CD14-positive monocyte (primary cell): ENCODE measurements at regions of chr11 and their contacts with region 1.

Region 1: DNA sequence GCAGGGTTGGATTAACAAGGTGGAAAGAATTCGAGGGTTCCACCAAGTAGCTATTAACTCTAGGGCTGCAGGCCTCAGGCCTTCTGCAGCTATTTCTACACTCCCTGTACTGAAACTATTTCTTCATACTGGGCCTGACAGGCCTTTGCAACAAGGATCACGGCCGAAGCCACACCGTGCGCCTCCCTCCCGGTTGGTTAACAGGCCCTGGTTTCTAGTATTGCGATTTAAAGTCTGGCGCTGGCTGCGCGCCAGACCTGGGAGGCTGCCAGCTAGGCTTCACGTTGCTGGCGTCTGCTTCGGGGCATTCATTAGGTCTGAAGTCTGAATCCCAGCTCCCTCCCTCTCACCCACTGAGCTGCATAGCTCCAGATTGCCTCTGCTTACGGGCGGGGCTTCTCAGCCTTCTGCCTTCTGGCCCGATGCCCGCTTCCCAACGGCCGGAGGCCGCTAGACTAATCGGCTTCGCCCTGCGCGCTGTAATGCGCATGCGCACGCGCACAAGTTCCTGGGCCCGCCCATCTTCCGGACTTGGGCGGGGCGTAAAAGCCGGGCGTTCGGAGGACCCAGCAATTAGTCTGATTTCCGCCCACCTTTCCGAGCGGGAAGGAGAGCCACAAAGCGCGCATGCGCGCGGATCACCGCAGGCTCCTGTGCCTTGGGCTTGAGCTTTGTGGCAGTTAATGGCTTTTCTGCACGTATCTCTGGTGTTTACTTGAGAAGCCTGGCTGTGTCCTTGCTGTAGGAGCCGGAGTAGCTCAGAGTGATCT is 1.6 kb downstream of the LDHA start:
- DNase-seq: peak; percentile 95 to 96 (median 95)
- H3K4me3 ChIP-seq: peak overlapping the region; percentile 78 to 93 (median 92)
- H3K4me3 Mint-ChIP-seq: peak overlapping the region; percentile 96 to 99
- H3K27ac ChIP-seq: peak overlapping the region; percentile 90 to 95
- H3K27ac Mint-ChIP-seq: peak overlapping the region; percentile 94 to 98 (median 96)
- H3K4me1 ChIP-seq: peaks cover 20 to 28% of the 10 kb centered on the region in 2 donors
- H3K4me1 Mint-ChIP-seq: peaks cover 23% of the 10 kb centered on the region
- H3K27me3 ChIP-seq: no peaks in the 10 kb centered on the region
- H3K27me3 Mint-ChIP-seq: peaks cover 0 to 3% (median 0%) of the 10 kb centered on the region in 3 donors
- CTCF ChIP-seq: no peak

Region 2: GRCh38 chr11:18243783-18244362 is 152.0 kb before region 1 on chr11:
- intact Hi-C with region 1: loop called in 1 of 2 experiments (anchors 10 kb)
- DNase-seq: peak; percentile 63 to 74 (median 72)
- H3K4me3 ChIP-seq: no peak overlapping the region
- H3K4me3 Mint-ChIP-seq: no peak overlapping the region
- H3K27ac ChIP-seq: no peak overlapping the region
- H3K27ac Mint-ChIP-seq: no peak overlapping the region
- H3K4me1 ChIP-seq: no peaks in the 10 kb centered on the region
- H3K4me1 Mint-ChIP-seq: peaks cover 11% of the 10 kb centered on the region
- H3K27me3 ChIP-seq: peaks cover 6 to 18% of the 10 kb centered on the region in 2 donors
- H3K27me3 Mint-ChIP-seq: peaks cover 2 to 10% (median 7%) of the 10 kb centered on the region in 3 donors
- CTCF ChIP-seq: peak; percentile 91

Region 3: DNA sequence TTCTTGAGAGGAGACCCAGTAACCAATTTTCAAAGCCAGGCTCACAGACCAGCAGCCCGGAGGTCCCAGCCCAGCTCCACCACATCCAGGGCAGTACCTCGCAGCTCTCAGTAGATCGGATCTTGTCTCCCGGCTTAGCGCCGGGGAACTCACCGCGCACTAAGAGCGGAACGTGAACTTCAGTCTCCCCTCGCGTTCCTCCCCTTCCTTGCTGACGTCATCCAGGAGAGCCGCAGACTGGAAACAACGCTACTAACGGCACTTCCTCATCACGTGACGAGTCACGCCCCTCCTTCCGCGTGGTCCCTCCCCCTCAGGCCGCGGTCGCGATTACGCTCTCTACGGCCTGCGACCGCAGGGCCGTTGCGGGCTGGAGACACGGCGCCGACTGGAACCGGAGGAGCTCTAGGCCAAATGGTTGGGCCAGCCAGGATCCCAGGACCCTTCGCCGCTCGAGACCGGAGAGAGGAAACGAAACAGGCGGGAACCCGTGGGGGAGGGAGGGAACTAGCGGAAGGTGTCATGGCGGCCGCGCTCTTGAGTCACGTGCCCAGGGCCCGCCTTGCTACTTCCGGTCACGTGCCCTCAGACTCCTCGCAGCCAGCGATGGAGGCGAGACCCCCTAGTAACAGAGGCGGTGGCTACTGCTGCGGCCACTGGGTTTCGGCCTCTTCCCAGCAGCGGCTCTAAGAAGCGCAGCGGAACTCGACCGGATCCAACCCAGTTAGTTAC is 73.8 kb before region 1 on chr11 and contains the starts of genes GTF2H1 and HPS5:
- intact Hi-C with region 1: loop called (anchors 2 to 5 kb)
- DNase-seq: peak; percentile 98 to 99 (median 99)
- H3K4me3 ChIP-seq: peak within 1 kb of the TSS; percentile 58 to 82 (median 82)
- H3K4me3 Mint-ChIP-seq: peak within 1 kb of the TSS; percentile 95 to 97
- H3K27ac ChIP-seq: peak within 1 kb of the TSS; percentile 93 to 94
- H3K27ac Mint-ChIP-seq: peak within 1 kb of the TSS; percentile 99 to 100 (median 100)
- H3K4me1 ChIP-seq: peaks cover 35 to 50% of the 10 kb centered on the region in 2 donors
- H3K4me1 Mint-ChIP-seq: peaks cover 60% of the 10 kb centered on the region
- H3K27me3 ChIP-seq: no peaks in the 10 kb centered on the region
- H3K27me3 Mint-ChIP-seq: no peaks in the 10 kb centered on the region
- CTCF ChIP-seq: no peak
- polyA plus RNA-seq, gene GTF2H1: 23.0 to 26.6 (median 26.2) TPM
- polyA plus RNA-seq, gene HPS5: 11.4 to 17.7 (median 12.9) TPM

Region 4: GRCh38 chr11:18383388-18384156 is 12.3 kb before region 1 on chr11:
- intact Hi-C with region 1: loop called in 1 of 2 experiments (anchors 1 kb)
- DNase-seq: peak; percentile 91 to 98 (median 98)
- H3K4me3 ChIP-seq: peak overlapping the region in 1 of 3 experiments; percentile 14
- H3K4me3 Mint-ChIP-seq: peak overlapping the region in 1 of 2 donors; percentile 53
- H3K27ac ChIP-seq: peak overlapping the region; percentile 90 to 99
- H3K27ac Mint-ChIP-seq: peak overlapping the region; percentile 92 to 100 (median 98)
- H3K4me1 ChIP-seq: peaks cover 25 to 30% of the 10 kb centered on the region in 2 donors
- H3K4me1 Mint-ChIP-seq: peaks cover 30% of the 10 kb centered on the region
- H3K27me3 ChIP-seq: no peaks in the 10 kb centered on the region
- H3K27me3 Mint-ChIP-seq: peaks cover 0 to 3% (median 3%) of the 10 kb centered on the region in 3 donors
- CTCF ChIP-seq: no peak

Region 5: GRCh38 chr11:18526521-18527296 is 130.8 kb after region 1 on chr11 and contains the start of gene TSG101:
- intact Hi-C with region 1: loop called (anchors 5 to 10 kb)
- DNase-seq: peak; percentile 90 to 97 (median 96)
- H3K4me3 ChIP-seq: peak within 1 kb of the TSS; percentile 68 to 95 (median 89)
- H3K4me3 Mint-ChIP-seq: peak within 1 kb of the TSS; percentile 94 to 99
- H3K27ac ChIP-seq: peak within 1 kb of the TSS; percentile 99 to 100
- H3K27ac Mint-ChIP-seq: peak within 1 kb of the TSS; percentile 100
- H3K4me1 ChIP-seq: peaks cover 14 to 19% of the 10 kb centered on the region in 2 donors
- H3K4me1 Mint-ChIP-seq: peaks cover 18% of the 10 kb centered on the region
- H3K27me3 ChIP-seq: no peaks in the 10 kb centered on the region
- H3K27me3 Mint-ChIP-seq: no peaks in the 10 kb centered on the region
- CTCF ChIP-seq: no peak
- polyA plus RNA-seq, gene TSG101: 76.7 to 116 (median 112) TPM

Region 6: GRCh38 chr11:18634140-18635032 is 238.5 kb after region 1 on chr11 and contains the start of gene SPTY2D1:
- intact Hi-C with region 1: loop called (anchors 5 to 10 kb)
- DNase-seq: peak; percentile 99 to 100 (median 99)
- H3K4me3 ChIP-seq: peak within 1 kb of the TSS; percentile 65 to 85 (median 70)
- H3K4me3 Mint-ChIP-seq: peak within 1 kb of the TSS; percentile 94 to 97
- H3K27ac ChIP-seq: peak within 1 kb of the TSS; percentile 92 to 96
- H3K27ac Mint-ChIP-seq: peak within 1 kb of the TSS; percentile 99 to 100 (median 100)
- H3K4me1 ChIP-seq: peaks cover 15 to 19% of the 10 kb centered on the region in 2 donors
- H3K4me1 Mint-ChIP-seq: peaks cover 18% of the 10 kb centered on the region
- H3K27me3 ChIP-seq: no peaks in the 10 kb centered on the region
- H3K27me3 Mint-ChIP-seq: peaks cover 3 to 14% (median 7%) of the 10 kb centered on the region in 3 donors
- CTCF ChIP-seq: no peak
- polyA plus RNA-seq, gene SPTY2D1: 8.4 to 14.9 (median 11.8) TPM